ENCODE measurements at regions of chr7 and their contacts with region 1.

Region 1: DNA sequence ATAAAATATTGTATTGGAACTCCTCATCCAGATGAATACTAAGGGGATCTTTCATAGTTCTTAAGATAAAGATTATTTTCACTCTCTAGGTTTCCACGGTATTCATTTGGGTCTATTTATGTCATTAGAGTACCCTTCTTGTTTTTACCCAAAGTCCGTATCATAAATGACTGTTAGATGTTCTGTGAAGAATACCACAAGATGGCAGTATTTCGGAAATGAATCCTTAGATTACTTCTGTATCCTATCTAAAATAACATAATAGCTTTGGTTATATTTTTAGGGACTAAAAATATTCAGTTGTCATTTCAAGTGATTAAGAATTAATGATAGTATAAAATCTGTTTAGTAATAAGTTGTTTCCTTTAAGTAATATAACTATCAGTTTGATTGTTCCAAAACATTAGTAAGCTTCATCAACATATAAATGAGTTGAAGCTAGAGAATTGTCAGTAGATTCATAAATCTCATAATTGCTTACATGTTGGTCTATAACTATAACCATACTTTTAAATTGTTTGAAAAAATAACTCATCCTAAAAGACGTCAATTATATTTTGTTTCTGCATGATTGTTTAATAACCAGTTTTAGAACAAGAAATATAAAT is 337.5 kb upstream of the KCND2 start:
- DNase-seq: no peak
- ATAC-seq: no peak
- H3K4me3 ChIP-seq: no peak overlapping the region
- H3K27ac ChIP-seq: no peak overlapping the region
- H3K4me1 ChIP-seq: no peaks in the 10 kb centered on the region
- H3K27me3 ChIP-seq: no peaks in the 10 kb centered on the region

Region 2: GRCh38 chr7:120272261-120272660 is 336.7 kb after region 1 on chr7:
- intact Hi-C with region 1: loop called (anchors 2 kb)
- DNase-seq: no peak
- ATAC-seq: peak; percentile 77
- H3K4me3 ChIP-seq: peak overlapping the region; percentile 35 to 72
- H3K27ac ChIP-seq: no peak overlapping the region
- H3K4me1 ChIP-seq: no peaks in the 10 kb centered on the region
- H3K27me3 ChIP-seq: peaks cover 0 to 2% of the 10 kb centered on the region in 2 donors

Region 3: GRCh38 chr7:120421151-120421651 is 485.7 kb after region 1 on chr7:
- intact Hi-C with region 1: loop called in 1 of 2 experiments (anchors 5 kb)
- DNase-seq: no peak
- ATAC-seq: no peak
- H3K4me3 ChIP-seq: no peak overlapping the region
- H3K27ac ChIP-seq: no peak overlapping the region
- H3K4me1 ChIP-seq: no peaks in the 10 kb centered on the region
- H3K27me3 ChIP-seq: no peaks in the 10 kb centered on the region